Right ventricle myocardium superior (tissue), 1 donor: ENCODE measurements at regions of chr17 and their contacts with region 1.

Region 1: GRCh38 chr17:81601525-81602120 is 35.3 kb downstream of the NPLOC4 start:
- DNase-seq: no peak
- ATAC-seq: peak; percentile 87

Region 2: GRCh38 chr17:81253358-81254131 is 348.1 kb before region 1 on chr17:
- intact Hi-C with region 1: loop called (anchors 5 kb)
- DNase-seq: peak; percentile 70
- ATAC-seq: peak; percentile 50